GM13977 (cell line): ENCODE measurements at regions of chr2 and their contacts with region 1.

Region 1: DNA sequence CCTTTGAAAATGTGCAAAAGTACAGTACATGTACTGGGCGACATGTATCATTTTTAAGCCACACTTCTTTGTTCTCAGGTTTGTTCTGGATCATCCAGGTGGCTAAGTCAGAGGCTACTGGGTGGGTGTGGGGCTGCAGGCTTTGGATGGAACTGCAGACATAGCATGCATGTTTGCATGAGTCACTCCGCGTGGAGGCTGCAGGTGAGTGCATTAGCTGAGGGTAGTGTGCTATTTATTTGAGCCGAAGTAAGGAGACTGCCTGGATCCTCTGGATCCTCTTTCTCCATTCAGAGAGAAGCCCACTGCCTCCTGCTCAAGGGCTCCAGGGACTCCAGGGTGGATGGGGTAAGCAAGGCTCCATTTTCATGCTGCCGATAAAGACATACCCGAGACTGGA is 9.4 kb upstream of the NEURL3 start:
- DNase-seq: no peak
- CTCF ChIP-seq: no peak

Region 2: DNA sequence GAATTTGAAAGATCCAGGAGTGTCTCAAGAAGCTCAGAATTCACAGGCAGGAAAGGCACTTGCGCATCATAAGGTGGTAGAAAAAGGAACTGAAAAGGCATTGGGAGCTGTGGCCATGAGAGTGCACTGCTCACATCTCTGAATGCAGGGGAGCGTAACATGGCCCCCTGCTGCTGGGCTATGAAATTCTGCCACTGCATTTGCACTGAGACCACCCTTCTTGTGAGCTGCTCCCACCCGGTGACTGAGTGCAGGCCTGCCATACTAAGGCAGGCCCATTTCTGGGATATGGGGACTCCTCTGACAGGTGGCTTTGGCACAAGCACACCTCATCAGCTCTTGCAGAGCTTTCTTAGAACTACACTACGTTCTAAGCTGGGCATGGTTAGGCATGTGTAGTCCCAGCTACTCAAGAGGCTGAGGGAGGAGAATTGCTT is 280.6 kb before region 1 on chr2:
- in situ Hi-C with region 1: no loop called
- DNase-seq: peak; percentile 47
- CTCF ChIP-seq: peak; percentile 47

Region 3: DNA sequence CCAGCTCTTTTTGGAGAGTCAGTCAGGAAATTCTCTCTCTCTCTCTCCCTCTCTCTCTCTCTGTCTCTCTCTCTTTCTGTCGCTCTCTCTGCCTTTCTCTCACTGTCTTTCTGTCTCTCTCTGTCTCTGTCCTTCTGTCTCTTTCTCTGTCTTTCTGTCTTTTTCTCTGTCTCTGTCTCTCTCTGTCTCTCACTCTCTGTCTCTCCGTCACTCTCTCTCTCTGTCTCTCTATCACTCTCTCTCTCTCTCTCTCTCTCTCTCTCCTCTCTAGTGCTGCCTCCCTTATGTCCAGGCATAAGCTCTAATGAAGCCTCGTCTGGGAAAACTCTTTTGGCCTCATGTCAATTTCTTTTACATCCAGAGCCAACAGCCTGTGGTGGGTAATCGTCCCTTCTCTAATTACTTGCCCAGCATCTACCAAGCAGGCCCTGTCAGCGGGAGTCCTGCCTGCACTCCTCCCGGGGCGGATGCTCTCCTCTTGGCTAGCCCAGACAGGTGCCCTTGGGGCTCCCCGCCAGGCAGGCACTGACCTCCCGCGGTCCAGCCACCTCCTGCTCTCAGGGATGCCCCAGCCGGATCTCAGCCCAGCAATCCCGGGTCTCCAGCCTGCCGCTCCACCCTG is 104.9 kb before region 1 on chr2:
- in situ Hi-C with region 1: loop called (anchors 10 kb)
- DNase-seq: no peak
- CTCF ChIP-seq: no peak

Region 4: DNA sequence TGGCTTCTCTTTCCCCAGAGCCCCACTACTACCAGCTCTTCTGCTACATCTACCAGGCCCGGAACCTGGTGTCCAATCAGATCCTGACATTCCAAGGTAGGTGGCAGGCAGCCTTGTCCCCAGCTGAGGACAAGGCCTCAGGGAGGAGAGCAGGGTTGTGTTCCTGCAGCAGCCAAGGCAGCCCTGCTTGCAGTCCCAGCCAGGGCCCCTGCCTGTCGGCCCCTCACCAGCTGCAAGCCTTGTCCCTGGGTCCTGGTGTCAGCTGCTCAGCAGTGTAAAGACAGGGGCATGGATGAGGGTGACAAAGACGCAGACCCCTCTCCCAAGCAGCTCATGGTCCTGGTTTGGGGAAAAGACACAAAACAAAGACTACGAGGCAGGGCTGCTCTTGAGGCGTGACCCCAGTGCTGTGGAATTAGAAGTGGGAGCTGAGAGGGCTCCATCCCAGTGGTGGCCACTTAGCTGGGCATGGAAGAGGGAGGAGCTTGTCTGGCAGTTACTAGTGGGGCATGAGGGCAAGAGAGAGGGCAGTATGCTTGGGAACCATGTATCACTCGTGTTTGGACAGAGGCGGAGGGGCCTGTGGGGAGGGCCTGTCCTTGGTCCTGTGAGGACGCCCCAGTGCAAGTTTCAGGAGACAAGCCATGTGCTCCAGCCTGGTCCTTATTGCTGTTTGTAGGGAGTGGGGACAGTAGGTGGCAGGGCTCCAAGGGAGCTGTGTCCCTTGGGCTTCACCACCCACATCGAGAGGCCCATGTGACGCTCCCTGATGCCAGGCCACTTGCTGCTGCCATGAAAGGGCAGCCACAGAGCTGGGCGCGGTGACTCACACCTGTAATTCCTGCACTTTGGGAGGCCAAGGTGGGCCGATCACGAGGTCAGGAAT is 177.8 kb after region 1 on chr2:
- in situ Hi-C with region 1: no loop called
- DNase-seq: no peak
- CTCF ChIP-seq: no peak